Ascending aorta (tissue), 2 donors: ENCODE measurements at regions of chr2 and their contacts with region 1.

Region 1: DNA sequence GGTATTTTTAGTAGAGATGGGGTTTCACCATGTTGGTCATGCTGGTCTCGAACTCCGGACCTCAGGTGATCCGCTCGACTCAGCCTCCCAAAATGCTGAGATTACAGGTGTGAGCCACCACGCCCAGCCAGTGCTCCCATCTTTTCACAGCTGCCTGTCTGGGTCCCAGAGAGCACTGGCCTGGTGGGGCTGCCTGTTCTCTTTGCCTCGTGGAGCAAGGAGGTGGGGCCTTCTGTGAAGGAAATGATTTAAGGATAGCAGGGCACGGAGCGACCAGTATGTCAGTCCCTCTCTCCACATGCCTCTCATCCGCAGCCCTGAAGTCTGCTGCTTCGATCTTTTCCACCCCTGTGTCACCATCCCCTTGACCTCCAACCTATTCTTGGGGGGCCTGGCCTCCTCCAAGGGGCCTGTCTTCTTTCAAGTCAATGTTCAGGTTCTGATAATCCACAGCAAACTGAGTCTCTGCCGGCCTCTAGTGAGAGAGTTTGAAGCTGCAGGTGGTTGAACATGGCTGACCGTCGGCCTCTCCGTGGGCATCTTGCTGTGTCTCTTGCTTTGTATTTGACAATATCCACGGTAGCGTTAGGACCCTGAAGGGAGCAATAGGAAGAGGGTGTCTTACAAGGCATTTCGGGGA is 28.2 kb upstream of the GIGYF2 start:
- DNase-seq: no peak
- H3K4me3 ChIP-seq: peak overlapping the region in 1 of 2 donors; percentile 31
- H3K27ac ChIP-seq: peak overlapping the region; percentile 66 to 85
- H3K4me1 ChIP-seq: peaks cover 9 to 32% of the 10 kb centered on the region in 2 donors
- H3K27me3 ChIP-seq: no peaks in the 10 kb centered on the region
- CTCF ChIP-seq: peak; percentile 56 to 75 (median 61)

Region 2: GRCh38 chr2:232632908-232633732 is 35.8 kb before region 1 on chr2 and contains the start of gene EFHD1:
- intact Hi-C with region 1: loop called (anchors 1 kb)
- DNase-seq: peak; percentile 39 to 93
- H3K4me3 ChIP-seq: peak within 1 kb of the TSS; percentile 78 to 92
- H3K27ac ChIP-seq: peak within 1 kb of the TSS; percentile 90 to 99
- H3K4me1 ChIP-seq: peaks cover 0 to 29% of the 10 kb centered on the region in 2 donors
- H3K27me3 ChIP-seq: no peaks in the 10 kb centered on the region
- CTCF ChIP-seq: no peak
- total RNA-seq, gene EFHD1: 142 TPM

Region 3: DNA sequence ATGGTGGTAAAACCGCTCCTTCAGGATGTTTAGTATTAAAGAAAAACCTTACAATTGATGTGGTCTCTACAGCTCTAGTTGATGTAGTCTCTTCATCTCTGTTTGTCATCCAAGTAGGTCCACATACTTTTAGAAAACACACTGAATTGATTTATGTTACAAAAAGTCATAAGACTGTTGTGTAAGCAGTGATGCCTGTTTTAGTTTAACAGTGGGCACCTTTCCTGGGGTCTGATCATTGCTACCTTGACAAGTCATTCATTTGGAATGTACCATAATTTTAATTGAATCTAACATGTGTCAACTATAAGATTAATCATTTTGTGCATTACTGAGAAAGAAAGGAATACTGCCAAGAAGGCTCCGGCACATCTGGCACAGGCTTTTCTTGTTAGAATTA is 62.5 kb after region 1 on chr2:
- intact Hi-C with region 1: no loop called
- DNase-seq: no peak
- H3K4me3 ChIP-seq: no peak overlapping the region
- H3K27ac ChIP-seq: no peak overlapping the region
- H3K4me1 ChIP-seq: peaks cover 0 to 4% of the 10 kb centered on the region in 2 donors
- H3K27me3 ChIP-seq: no peaks in the 10 kb centered on the region
- CTCF ChIP-seq: no peak

Region 4: DNA sequence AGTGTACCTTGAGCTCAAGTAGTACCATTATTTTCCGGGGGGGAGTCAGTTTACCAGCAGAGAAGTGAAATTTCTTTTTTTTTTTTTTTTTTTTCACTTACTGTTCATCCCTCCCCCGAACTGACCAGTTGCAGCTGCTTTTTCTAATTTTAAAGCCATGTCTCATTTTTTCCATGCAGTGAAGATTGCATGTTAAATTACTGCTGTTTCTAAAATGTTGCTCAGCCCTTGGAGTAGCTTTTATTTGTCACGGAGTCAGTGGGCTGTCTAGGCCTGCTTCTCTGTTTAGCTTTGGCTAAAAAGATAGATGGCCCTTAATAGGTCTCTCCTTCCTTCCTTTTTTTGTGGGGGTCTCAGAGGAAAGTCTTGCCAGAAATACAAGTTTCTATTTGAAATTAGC is 273.9 kb after region 1 on chr2:
- intact Hi-C with region 1: no loop called
- DNase-seq: no peak
- H3K4me3 ChIP-seq: no peak overlapping the region
- H3K27ac ChIP-seq: no peak overlapping the region
- H3K4me1 ChIP-seq: no peaks in the 10 kb centered on the region
- H3K27me3 ChIP-seq: no peaks in the 10 kb centered on the region
- CTCF ChIP-seq: no peak